Dendritic cell treated with granulocyte-macrophage colony-stimulating factor and Interleukin-4, amounts not matched to agents 40 ng/mL and 50 ng/mL, for 4 days (primary cell): ENCODE measurements at regions of chr3 and their contacts with region 1.

Region 1: GRCh38 chr3:31227131-31227562 is 305.6 kb upstream of the STT3B start:
- H3K4me3 Mint-ChIP-seq: no peak overlapping the region
- H3K27ac Mint-ChIP-seq: no peak overlapping the region
- H3K4me1 Mint-ChIP-seq: peaks cover 56% of the 10 kb centered on the region
- H3K27me3 Mint-ChIP-seq: peaks cover 2% of the 10 kb centered on the region

Region 2: DNA sequence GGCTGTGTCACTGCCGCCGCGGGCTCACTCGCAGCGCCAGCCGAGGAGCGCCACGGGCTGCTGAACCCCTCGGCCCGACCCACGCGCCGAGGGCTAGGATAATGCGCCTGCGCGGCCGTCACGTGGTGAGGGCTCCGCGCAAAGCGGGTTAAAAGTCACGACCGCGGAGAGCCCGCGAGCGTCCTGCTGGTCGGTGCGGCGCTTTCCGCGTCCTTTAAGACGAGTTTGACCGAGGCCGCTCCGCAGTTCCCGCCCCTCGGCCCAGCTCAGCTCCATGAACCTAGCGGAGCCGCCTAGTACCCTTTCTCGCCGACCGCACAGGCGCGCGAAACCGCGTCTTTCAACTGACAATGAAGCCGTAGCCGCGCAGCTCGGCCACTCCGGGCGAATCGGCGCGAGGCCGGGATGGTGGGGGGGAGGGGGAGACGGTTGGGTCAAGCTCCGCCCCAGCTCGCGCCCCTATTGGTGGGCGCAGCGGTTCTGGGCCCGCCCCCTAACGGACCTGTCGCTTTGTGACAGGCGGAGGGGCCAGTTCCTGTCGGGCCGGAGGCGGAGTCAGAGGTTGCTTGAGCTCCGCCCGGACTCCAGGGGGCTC is 304.9 kb after region 1 on chr3:
- intact Hi-C with region 1: loop called (anchors 5 kb)
- H3K4me3 Mint-ChIP-seq: peak overlapping the region; percentile 94
- H3K27ac Mint-ChIP-seq: peak overlapping the region; percentile 97
- H3K4me1 Mint-ChIP-seq: peaks cover 12% of the 10 kb centered on the region
- H3K27me3 Mint-ChIP-seq: no peaks in the 10 kb centered on the region